Aorta (tissue), 5 donors: ENCODE measurements at regions of chr2 and their contacts with region 1.

Region 1: DNA sequence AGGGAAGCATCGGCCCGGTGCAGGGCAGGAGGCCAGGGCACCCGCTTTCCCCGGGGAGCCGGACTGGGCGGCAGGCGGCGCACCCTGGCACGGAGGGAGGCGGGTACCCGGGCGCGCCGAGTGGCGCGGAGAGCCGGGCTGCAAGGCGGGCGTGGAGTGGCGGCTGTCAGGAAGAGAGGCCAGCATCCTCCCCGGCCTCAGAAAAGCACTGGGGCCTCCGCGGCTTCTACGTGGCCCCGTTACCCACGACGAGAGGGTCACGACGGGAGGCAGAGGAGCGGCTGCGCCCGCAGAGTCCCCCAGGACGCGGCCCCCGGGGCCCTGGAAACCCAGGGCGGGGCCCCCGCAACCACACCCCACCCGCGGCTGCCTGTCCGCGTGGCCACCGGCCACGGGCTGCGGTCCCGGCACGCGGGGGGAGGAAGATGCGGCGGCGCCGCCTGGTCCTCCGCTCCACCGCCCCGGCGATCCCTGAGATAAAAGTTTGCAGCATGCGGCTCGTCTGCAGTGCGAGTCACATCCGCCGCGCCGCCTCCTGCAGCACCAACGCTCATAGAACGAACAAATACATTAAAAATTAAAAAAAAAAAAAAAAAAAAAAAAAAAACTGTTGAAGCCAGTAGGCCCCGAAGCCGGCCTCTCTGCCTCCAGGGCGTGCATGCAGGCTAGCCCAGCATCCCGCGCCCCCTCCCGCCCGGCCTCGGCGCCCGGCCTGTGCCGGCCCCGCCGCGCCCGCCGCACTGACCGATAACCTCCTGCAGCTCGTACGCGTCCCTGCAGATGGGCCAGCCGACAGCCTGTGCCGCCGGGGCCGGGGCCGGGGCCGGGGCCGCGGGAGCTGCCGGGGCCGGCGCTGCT is 683 bp downstream of the STK39 start:
- DNase-seq: peak; percentile 76 to 92
- ATAC-seq: peak; percentile 86
- H3K4me3 ChIP-seq: peak overlapping the region; percentile 74 to 86
- H3K27ac ChIP-seq: peak overlapping the region in 1 of 2 donors; percentile 24
- H3K4me1 ChIP-seq: peaks cover 0 to 5% of the 10 kb centered on the region in 2 donors
- H3K27me3 ChIP-seq: no peaks in the 10 kb centered on the region

Region 2: GRCh38 chr2:168160897-168161296 is 85.8 kb before region 1 on chr2:
- intact Hi-C with region 1: loop called in 1 of 2 experiments (anchors 10 kb)
- DNase-seq: no peak
- ATAC-seq: no peak
- H3K4me3 ChIP-seq: no peak overlapping the region
- H3K27ac ChIP-seq: no peak overlapping the region
- H3K4me1 ChIP-seq: peaks cover 1 to 6% of the 10 kb centered on the region in 2 donors
- H3K27me3 ChIP-seq: no peaks in the 10 kb centered on the region

Region 3: DNA sequence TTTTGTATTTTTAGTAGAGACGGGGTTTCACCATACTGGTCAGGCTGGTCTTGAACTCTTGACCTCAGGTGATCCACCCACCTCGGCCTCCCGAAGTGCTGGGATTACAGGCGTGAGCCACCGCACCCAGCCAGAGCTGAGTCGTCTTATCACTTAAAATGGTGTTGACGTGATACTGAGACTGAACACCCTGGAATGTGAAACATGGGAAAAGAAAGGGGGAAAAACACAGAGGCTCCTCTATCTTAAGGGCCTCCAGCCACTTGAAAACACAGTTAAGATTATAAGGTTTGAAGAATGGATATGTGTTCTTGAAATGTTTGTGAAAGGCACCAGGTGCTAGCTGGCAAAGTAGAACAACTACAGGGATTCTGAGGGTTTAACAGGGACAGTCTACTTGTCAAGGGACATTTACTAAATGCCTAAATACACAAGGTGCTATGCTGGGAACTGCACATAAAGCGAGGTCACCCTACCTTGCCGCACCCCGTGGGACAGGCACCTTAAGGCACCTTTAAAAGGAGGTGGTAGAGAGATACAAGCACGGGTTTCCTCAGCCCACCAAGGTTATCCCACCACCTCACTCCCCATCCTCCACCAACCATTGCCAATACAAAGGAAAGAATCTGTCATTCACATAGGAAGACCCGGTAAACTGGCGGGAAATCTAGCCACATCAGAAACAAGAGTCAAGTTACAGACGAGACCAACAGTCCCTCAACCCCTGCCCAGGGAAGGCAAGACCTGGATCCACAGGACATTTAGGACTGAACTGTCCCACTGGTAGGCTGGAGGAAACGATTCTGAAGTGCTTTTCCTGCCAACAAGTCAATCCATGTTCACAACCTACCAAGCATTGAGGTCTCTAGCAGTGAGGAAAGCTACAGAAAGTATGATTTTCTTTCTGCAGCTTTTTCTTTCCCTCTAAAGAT is 42.7 kb before region 1 on chr2:
- intact Hi-C with region 1: loop called in 1 of 2 experiments (anchors 5 kb)
- DNase-seq: no peak
- ATAC-seq: no peak
- H3K4me3 ChIP-seq: no peak overlapping the region
- H3K27ac ChIP-seq: no peak overlapping the region
- H3K4me1 ChIP-seq: no peaks in the 10 kb centered on the region
- H3K27me3 ChIP-seq: no peaks in the 10 kb centered on the region